ENCODE measurements at regions of chr19 and their contacts with region 1.

Region 1: GRCh38 chr19:40472516-40472915 is 5.7 kb downstream of the SPTBN4 start:
- DNase-seq: no peak
- ATAC-seq: no peak
- H3K4me3 ChIP-seq: no peak overlapping the region
- H3K27ac ChIP-seq: no peak overlapping the region
- H3K4me1 ChIP-seq: no peaks in the 10 kb centered on the region
- H3K27me3 ChIP-seq: peaks cover 2% of the 10 kb centered on the region; the same call in 1 of the 2 replicates
- CTCF ChIP-seq: no peak
- POLR2A ChIP-seq: no peak
- RAD21 ChIP-seq: no peak

Region 2: GRCh38 chr19:39277612-39278011 is 1194.9 kb before region 1 on chr19:
- CTCF ChIA-PET with region 1: no interaction called
- POLR2A ChIA-PET with region 1: no interaction called
- dilution Hi-C with region 1: no loop called
- in situ Hi-C with region 1: no loop called
- intact Hi-C with region 1: no loop called
- DNase-seq: no peak
- ATAC-seq: no peak; the same call in 1 of the 2 replicates
- H3K4me3 ChIP-seq: no peak overlapping the region
- H3K27ac ChIP-seq: no peak overlapping the region
- H3K4me1 ChIP-seq: no peaks in the 10 kb centered on the region
- H3K27me3 ChIP-seq: peaks cover 15% of the 10 kb centered on the region
- CTCF ChIP-seq: no peak
- POLR2A ChIP-seq: no peak
- RAD21 ChIP-seq: no peak

Region 3: DNA sequence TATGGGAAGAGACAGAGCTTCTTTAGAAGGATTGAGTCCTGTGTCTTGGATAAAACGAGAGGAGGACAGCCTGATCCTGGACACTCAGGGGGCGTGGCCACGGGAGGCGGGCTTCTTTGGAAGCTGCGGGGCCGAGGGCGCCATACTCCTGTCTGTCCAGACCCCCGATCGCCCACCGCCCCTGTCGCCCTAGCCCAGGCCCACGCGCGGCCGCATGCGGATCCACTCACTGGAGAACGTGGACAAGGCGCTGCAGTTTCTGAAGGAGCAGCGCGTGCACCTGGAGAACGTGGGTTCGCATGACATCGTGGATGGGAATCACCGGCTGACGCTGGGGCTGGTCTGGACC is 17.3 kb after region 1 on chr19:
- CTCF ChIA-PET with region 1: no interaction called
- POLR2A ChIA-PET with region 1: interaction called, 15 read pairs
- dilution Hi-C with region 1: no loop called
- in situ Hi-C with region 1: no loop called
- intact Hi-C with region 1: no loop called
- DNase-seq: no peak
- ATAC-seq: no peak
- H3K4me3 ChIP-seq: no peak overlapping the region
- H3K27ac ChIP-seq: no peak overlapping the region
- H3K4me1 ChIP-seq: no peaks in the 10 kb centered on the region
- H3K27me3 ChIP-seq: peaks cover 17% of the 10 kb centered on the region
- CTCF ChIP-seq: no peak
- POLR2A ChIP-seq: no peak
- RAD21 ChIP-seq: no peak

Region 4: DNA sequence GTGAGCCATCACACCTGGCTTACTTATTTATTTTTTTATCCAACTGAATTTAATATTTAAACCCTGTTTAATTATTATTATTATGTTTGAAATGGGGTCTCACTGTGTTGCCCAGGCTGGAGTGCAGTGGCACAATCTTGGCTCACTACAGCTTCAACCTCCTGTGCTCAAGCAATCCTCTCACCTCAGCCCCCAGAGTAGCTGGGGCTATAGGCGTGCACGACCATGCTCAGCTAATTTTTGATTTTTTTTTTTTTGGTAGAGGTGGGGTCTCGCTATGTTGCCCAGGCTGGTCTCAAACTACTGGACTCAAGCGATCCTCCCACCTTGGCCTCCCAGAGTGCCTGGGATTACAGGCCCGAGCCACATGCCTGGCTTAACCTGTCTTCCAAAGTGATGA is 26.8 kb after region 1 on chr19:
- CTCF ChIA-PET with region 1: no interaction called
- POLR2A ChIA-PET with region 1: no interaction called
- dilution Hi-C with region 1: no loop called
- in situ Hi-C with region 1: no loop called
- intact Hi-C with region 1: loop called (anchors 2 kb)
- DNase-seq: no peak
- ATAC-seq: no peak
- H3K4me3 ChIP-seq: no peak overlapping the region
- H3K27ac ChIP-seq: no peak overlapping the region
- H3K4me1 ChIP-seq: no peaks in the 10 kb centered on the region
- H3K27me3 ChIP-seq: peaks cover 21% of the 10 kb centered on the region
- CTCF ChIP-seq: no peak
- POLR2A ChIP-seq: no peak
- RAD21 ChIP-seq: no peak

Measured in IMR-90 (cell line).